B cell (primary cell): ENCODE measurements at regions of chr17 and their contacts with region 1.

Region 1: GRCh38 chr17:3683054-3683511 is 12.9 kb downstream of the P2RX5 start:
- DNase-seq: peak; percentile 89
- ATAC-seq: peak; percentile 73
- H3K4me3 ChIP-seq: no peak overlapping the region
- H3K4me3 Mint-ChIP-seq: peak overlapping the region; percentile 24
- H3K27ac ChIP-seq: peak overlapping the region; percentile 36 to 56
- H3K27ac Mint-ChIP-seq: peak overlapping the region; percentile 89
- H3K4me1 ChIP-seq: peaks cover 19 to 50% of the 10 kb centered on the region in 2 donors
- H3K4me1 Mint-ChIP-seq: peaks cover 44% of the 10 kb centered on the region
- H3K27me3 ChIP-seq: no peaks in the 10 kb centered on the region
- H3K27me3 Mint-ChIP-seq: no peaks in the 10 kb centered on the region
- CTCF ChIP-seq: peak; percentile 98

Region 2: GRCh38 chr17:3610523-3610922 is 72.6 kb before region 1 on chr17:
- CTCF ChIA-PET with region 1: no interaction called
- POLR2A ChIA-PET with region 1: no interaction called
- intact Hi-C with region 1: no loop called
- DNase-seq: no peak
- ATAC-seq: no peak
- H3K4me3 ChIP-seq: no peak overlapping the region
- H3K4me3 Mint-ChIP-seq: no peak overlapping the region
- H3K27ac ChIP-seq: no peak overlapping the region
- H3K27ac Mint-ChIP-seq: no peak overlapping the region
- H3K4me1 ChIP-seq: no peaks in the 10 kb centered on the region
- H3K4me1 Mint-ChIP-seq: no peaks in the 10 kb centered on the region
- H3K27me3 ChIP-seq: no peaks in the 10 kb centered on the region
- H3K27me3 Mint-ChIP-seq: no peaks in the 10 kb centered on the region
- CTCF ChIP-seq: no peak

Region 3: GRCh38 chr17:3647769-3648555 is 35.1 kb before region 1 on chr17:
- CTCF ChIA-PET with region 1: interaction called, 4 read pairs
- POLR2A ChIA-PET with region 1: interaction called, 10 read pairs
- intact Hi-C with region 1: no loop called
- DNase-seq: peak; percentile 55
- ATAC-seq: no peak
- H3K4me3 ChIP-seq: no peak overlapping the region
- H3K4me3 Mint-ChIP-seq: no peak overlapping the region
- H3K27ac ChIP-seq: no peak overlapping the region
- H3K27ac Mint-ChIP-seq: peak overlapping the region; percentile 15
- H3K4me1 ChIP-seq: peaks cover 20 to 28% of the 10 kb centered on the region in 2 donors
- H3K4me1 Mint-ChIP-seq: peaks cover 27% of the 10 kb centered on the region
- H3K27me3 ChIP-seq: no peaks in the 10 kb centered on the region
- H3K27me3 Mint-ChIP-seq: no peaks in the 10 kb centered on the region
- CTCF ChIP-seq: peak; percentile 39

Region 4: GRCh38 chr17:3668279-3669085 is 14.6 kb before region 1 on chr17 and contains the starts of genes EMC6 and TAX1BP3:
- CTCF ChIA-PET with region 1: no interaction called
- POLR2A ChIA-PET with region 1: no interaction called
- intact Hi-C with region 1: loop called (anchors 2 kb)
- DNase-seq: peak; percentile 99
- ATAC-seq: peak; percentile 90
- H3K4me3 ChIP-seq: peak within 1 kb of the TSS; percentile 60 to 99 (median 98)
- H3K4me3 Mint-ChIP-seq: peak within 1 kb of the TSS; percentile 96
- H3K27ac ChIP-seq: peak within 1 kb of the TSS; percentile 74 to 86
- H3K27ac Mint-ChIP-seq: peak within 1 kb of the TSS; percentile 94
- H3K4me1 ChIP-seq: peaks cover 11 to 21% of the 10 kb centered on the region in 2 donors
- H3K4me1 Mint-ChIP-seq: peaks cover 33% of the 10 kb centered on the region
- H3K27me3 ChIP-seq: no peaks in the 10 kb centered on the region
- H3K27me3 Mint-ChIP-seq: no peaks in the 10 kb centered on the region
- CTCF ChIP-seq: no peak
- total RNA-seq, gene EMC6: 23.4 and 26.6 TPM in 2 replicates
- total RNA-seq, gene TAX1BP3: 17.1 and 17.7 TPM in 2 replicates

Region 5: GRCh38 chr17:3695723-3696411 is 12.8 kb after region 1 on chr17 and contains the start of gene P2RX5:
- CTCF ChIA-PET with region 1: interaction called, 38 read pairs
- POLR2A ChIA-PET with region 1: interaction called, 4 read pairs
- intact Hi-C with region 1: no loop called
- DNase-seq: peak; percentile 80
- ATAC-seq: peak; percentile 52
- H3K4me3 ChIP-seq: peak within 1 kb of the TSS; percentile 58 to 93 (median 83)
- H3K4me3 Mint-ChIP-seq: peak within 1 kb of the TSS; percentile 100
- H3K27ac ChIP-seq: peak within 1 kb of the TSS; percentile 76 to 91
- H3K27ac Mint-ChIP-seq: peak within 1 kb of the TSS; percentile 99
- H3K4me1 ChIP-seq: peaks cover 35 to 65% of the 10 kb centered on the region in 2 donors
- H3K4me1 Mint-ChIP-seq: peaks cover 61% of the 10 kb centered on the region
- H3K27me3 ChIP-seq: no peaks in the 10 kb centered on the region
- H3K27me3 Mint-ChIP-seq: no peaks in the 10 kb centered on the region
- CTCF ChIP-seq: no peak
- total RNA-seq, gene P2RX5: 405 and 410 TPM in 2 replicates

Region 6: GRCh38 chr17:3710951-3711383 is 27.9 kb after region 1 on chr17:
- CTCF ChIA-PET with region 1: interaction called, 8 read pairs
- POLR2A ChIA-PET with region 1: interaction called, 12 read pairs
- intact Hi-C with region 1: loop called (anchors 2 kb)
- DNase-seq: peak; percentile 95
- ATAC-seq: peak; percentile 92
- H3K4me3 ChIP-seq: peak overlapping the region in 4 of 5 experiments; percentile 11 to 54 (median 35)
- H3K4me3 Mint-ChIP-seq: peak overlapping the region; percentile 85
- H3K27ac ChIP-seq: peak overlapping the region; percentile 60 to 82
- H3K27ac Mint-ChIP-seq: peak overlapping the region; percentile 96
- H3K4me1 ChIP-seq: peaks cover 38 to 54% of the 10 kb centered on the region in 2 donors
- H3K4me1 Mint-ChIP-seq: peaks cover 57% of the 10 kb centered on the region
- H3K27me3 ChIP-seq: no peaks in the 10 kb centered on the region
- H3K27me3 Mint-ChIP-seq: no peaks in the 10 kb centered on the region
- CTCF ChIP-seq: no peak

Region 7: GRCh38 chr17:3723556-3724369 is 40.7 kb after region 1 on chr17 and contains the start of gene HASPIN:
- CTCF ChIA-PET with region 1: interaction called, 184 read pairs
- POLR2A ChIA-PET with region 1: interaction called, 8 read pairs
- intact Hi-C with region 1: loop called (anchors 2 kb)
- DNase-seq: peak; percentile 95
- ATAC-seq: peak; percentile 72
- H3K4me3 ChIP-seq: peak within 1 kb of the TSS; percentile 76 to 96 (median 91)
- H3K4me3 Mint-ChIP-seq: peak within 1 kb of the TSS; percentile 96
- H3K27ac ChIP-seq: peak within 1 kb of the TSS; percentile 49 to 78
- H3K27ac Mint-ChIP-seq: peak within 1 kb of the TSS; percentile 94
- H3K4me1 ChIP-seq: peaks cover 48 to 69% of the 10 kb centered on the region in 2 donors
- H3K4me1 Mint-ChIP-seq: peaks cover 60% of the 10 kb centered on the region
- H3K27me3 ChIP-seq: no peaks in the 10 kb centered on the region
- H3K27me3 Mint-ChIP-seq: no peaks in the 10 kb centered on the region
- CTCF ChIP-seq: peak; percentile 26
- total RNA-seq, gene HASPIN: 2.4 and 3.1 TPM in 2 replicates

Region 8: GRCh38 chr17:3732210-3732621 is 49.1 kb after region 1 on chr17:
- CTCF ChIA-PET with region 1: interaction called, 184 read pairs
- POLR2A ChIA-PET with region 1: interaction called, 8 read pairs
- intact Hi-C with region 1: loop called (anchors 2 kb)
- DNase-seq: peak; percentile 65
- ATAC-seq: peak; percentile 87
- H3K4me3 ChIP-seq: no peak overlapping the region
- H3K4me3 Mint-ChIP-seq: peak overlapping the region; percentile 51
- H3K27ac ChIP-seq: peak overlapping the region in 1 of 2 donors; percentile 4
- H3K27ac Mint-ChIP-seq: peak overlapping the region; percentile 66
- H3K4me1 ChIP-seq: peaks cover 16 to 30% of the 10 kb centered on the region in 2 donors
- H3K4me1 Mint-ChIP-seq: peaks cover 42% of the 10 kb centered on the region
- H3K27me3 ChIP-seq: no peaks in the 10 kb centered on the region
- H3K27me3 Mint-ChIP-seq: no peaks in the 10 kb centered on the region
- CTCF ChIP-seq: no peak